ENCODE measurements at regions of chr19 and their contacts with region 1.

Region 1: DNA sequence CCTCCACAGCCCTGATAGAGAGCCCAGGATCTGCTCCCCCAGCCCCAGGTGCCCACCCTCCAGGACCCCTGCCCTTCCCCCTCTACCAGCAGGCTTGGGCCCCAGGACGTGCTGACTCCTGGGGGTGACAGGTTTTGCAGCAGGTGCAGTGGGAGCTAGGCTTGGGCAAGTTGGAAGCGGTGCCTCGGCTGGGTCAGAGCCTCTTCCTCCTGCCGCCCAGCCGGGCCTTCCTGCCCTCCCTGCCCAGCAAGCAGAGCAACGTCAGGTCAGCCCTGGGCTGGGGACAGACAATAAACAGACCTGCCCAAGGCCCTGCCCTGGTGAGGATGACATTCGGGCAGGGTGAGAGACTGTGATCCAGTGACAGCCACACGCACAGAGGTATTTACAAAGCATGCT is 9.2 kb upstream of the NCCRP1 start:
- DNase-seq: no peak
- H3K4me3 Mint-ChIP-seq: no peak overlapping the region
- H3K27ac Mint-ChIP-seq: no peak overlapping the region
- H3K4me1 Mint-ChIP-seq: peaks cover 6% of the 10 kb centered on the region
- H3K27me3 Mint-ChIP-seq: no peaks in the 10 kb centered on the region
- CTCF ChIP-seq: peak; percentile 17

Region 2: DNA sequence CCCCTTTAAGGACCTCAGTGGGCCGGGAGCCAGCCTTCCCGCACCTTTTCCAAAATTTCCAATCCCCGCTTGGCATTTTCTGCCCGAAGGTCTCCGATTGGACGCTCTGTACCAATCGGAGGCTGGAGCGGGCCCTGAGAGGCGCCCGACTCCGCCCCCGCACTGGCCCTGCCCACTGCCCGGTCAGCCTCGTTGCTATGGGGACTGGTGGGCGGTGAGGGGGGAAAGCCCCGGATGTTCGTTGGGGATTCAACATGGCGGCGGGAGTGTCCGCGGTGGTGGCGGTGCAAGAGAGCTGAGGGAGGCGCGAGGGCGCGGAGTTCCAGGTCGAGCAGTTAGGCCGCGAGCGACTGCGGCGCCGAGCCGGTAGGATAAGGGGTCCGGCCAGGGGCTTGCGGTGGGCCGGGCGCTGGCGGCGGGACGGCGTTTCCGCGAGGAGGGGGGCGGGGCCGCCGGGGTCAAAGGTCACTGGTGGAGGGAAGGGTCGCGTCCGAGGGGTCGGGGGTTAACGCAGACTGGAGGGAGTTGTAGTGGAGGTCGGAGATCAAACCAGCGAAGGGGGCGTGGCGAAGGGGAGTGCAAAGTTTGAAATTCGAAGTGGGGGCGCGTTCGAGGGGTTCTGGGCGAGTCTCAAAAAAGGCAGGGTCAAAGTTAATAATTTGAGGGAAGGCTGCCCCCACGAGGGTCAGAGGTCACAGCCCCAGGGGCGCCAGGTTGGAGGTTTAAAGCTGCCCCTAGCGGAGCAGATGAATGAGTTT is 61.8 kb before region 1 on chr19 and contains the start of gene PAK4:
- CTCF ChIA-PET with region 1: interaction called, 3 read pairs
- POLR2A ChIA-PET with region 1: no interaction called
- intact Hi-C with region 1: loop called (anchors 1 kb)
- DNase-seq: peak; percentile 99
- H3K4me3 Mint-ChIP-seq: peak within 1 kb of the TSS; percentile 87
- H3K27ac Mint-ChIP-seq: peak within 1 kb of the TSS; percentile 89
- H3K4me1 Mint-ChIP-seq: peaks cover 24% of the 10 kb centered on the region
- H3K27me3 Mint-ChIP-seq: no peaks in the 10 kb centered on the region
- CTCF ChIP-seq: no peak
- total RNA-seq, gene PAK4: 28.4 and 29.5 TPM in 2 replicates